ENCODE measurements at regions of chr16 and their contacts with region 1.

Region 1: GRCh38 chr16:23435500-23435899 is 17.5 kb downstream of the COG7 start:
- DNase-seq: peak; percentile 72
- ATAC-seq: peak; percentile 93
- H3K4me3 ChIP-seq: no peak overlapping the region
- H3K27ac ChIP-seq: no peak overlapping the region
- H3K4me1 ChIP-seq: no peaks in the 10 kb centered on the region
- H3K27me3 ChIP-seq: no peaks in the 10 kb centered on the region
- CTCF ChIP-seq: peak; percentile 87

Region 2: GRCh38 chr16:23081675-23082119 is 353.8 kb before region 1 on chr16:
- CTCF ChIA-PET with region 1: interaction called, 7 read pairs
- POLR2A ChIA-PET with region 1: no interaction called
- intact Hi-C with region 1: loop called (anchors 10 kb)
- DNase-seq: no peak
- ATAC-seq: peak; percentile 15; the same call in 1 of the 2 replicates
- H3K4me3 ChIP-seq: no peak overlapping the region
- H3K27ac ChIP-seq: no peak overlapping the region
- H3K4me1 ChIP-seq: peaks cover 13% of the 10 kb centered on the region
- H3K27me3 ChIP-seq: no peaks in the 10 kb centered on the region
- CTCF ChIP-seq: no peak

Measured in PC-3 (cell line).